Gastrocnemius medialis (tissue), 4 donors: ENCODE measurements at regions of chr3 and their contacts with region 1.

Region 1: DNA sequence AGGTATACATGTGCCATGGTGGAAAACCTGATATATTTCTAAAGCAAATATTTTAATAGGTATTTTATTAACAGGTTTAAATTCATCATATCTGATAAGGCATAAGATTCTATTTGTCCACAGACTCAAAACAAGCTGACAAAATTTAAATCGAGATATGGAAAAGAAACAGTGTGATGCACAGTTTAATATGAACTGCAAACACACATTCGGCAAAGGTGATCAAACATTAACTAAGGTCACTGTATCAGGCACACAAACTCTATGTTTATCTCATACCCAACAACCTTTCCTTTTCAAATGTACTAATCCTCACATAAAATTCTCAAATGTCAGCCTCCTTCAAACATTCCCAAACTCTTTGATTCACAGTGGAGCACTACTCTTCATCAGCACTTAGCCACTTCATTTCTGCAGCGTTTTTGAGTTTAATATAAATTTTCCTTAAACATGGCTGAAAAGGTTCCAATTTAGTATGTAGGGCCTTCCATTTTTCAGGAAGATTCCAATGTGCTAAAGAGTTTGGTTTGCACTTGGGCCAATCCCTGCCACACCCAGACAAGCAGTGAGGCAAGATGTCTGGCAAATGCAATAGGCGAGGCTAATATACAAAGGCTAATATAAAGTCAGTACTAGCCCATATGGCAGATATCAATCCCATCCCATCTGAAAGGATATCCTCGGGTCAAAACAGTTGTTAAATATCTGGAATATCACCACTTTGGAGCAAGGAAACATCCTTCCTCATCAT is 84.6 kb downstream of the GBE1 start:
- DNase-seq: no peak
- ATAC-seq: no peak
- H3K4me3 ChIP-seq: no peak overlapping the region
- H3K27ac ChIP-seq: peak overlapping the region in 1 of 4 donors; percentile 4
- H3K4me1 ChIP-seq: peaks cover 6 to 18% of the 10 kb centered on the region in 2 donors
- H3K27me3 ChIP-seq: no peaks in the 10 kb centered on the region
- CTCF ChIP-seq: no peak
- POLR2A ChIP-seq: no peak

Region 2: GRCh38 chr3:81602781-81603180 is 74.1 kb before region 1 on chr3:
- in situ Hi-C with region 1: no loop called
- intact Hi-C with region 1: no loop called
- DNase-seq: no peak
- ATAC-seq: no peak
- H3K4me3 ChIP-seq: no peak overlapping the region
- H3K27ac ChIP-seq: no peak overlapping the region
- H3K4me1 ChIP-seq: no peaks in the 10 kb centered on the region
- H3K27me3 ChIP-seq: no peaks in the 10 kb centered on the region
- CTCF ChIP-seq: no peak
- POLR2A ChIP-seq: no peak

Region 3: GRCh38 chr3:81707996-81708395 is 31.1 kb after region 1 on chr3:
- in situ Hi-C with region 1: no loop called
- intact Hi-C with region 1: loop called (anchors 5 kb)
- DNase-seq: no peak
- ATAC-seq: no peak
- H3K4me3 ChIP-seq: no peak overlapping the region
- H3K27ac ChIP-seq: peak overlapping the region in 2 of 4 donors; percentile 2 to 24
- H3K4me1 ChIP-seq: peaks cover 31 to 46% of the 10 kb centered on the region in 2 donors
- H3K27me3 ChIP-seq: no peaks in the 10 kb centered on the region
- CTCF ChIP-seq: no peak
- POLR2A ChIP-seq: no peak

Region 4: GRCh38 chr3:82000773-82001172 is 323.9 kb after region 1 on chr3:
- in situ Hi-C with region 1: loop called in 1 of 4 experiments (anchors 10 kb)
- intact Hi-C with region 1: no loop called
- DNase-seq: peak; percentile 15 to 31
- ATAC-seq: peak; percentile 53 to 79
- H3K4me3 ChIP-seq: no peak overlapping the region
- H3K27ac ChIP-seq: no peak overlapping the region
- H3K4me1 ChIP-seq: peaks cover 14 to 16% of the 10 kb centered on the region in 2 donors
- H3K27me3 ChIP-seq: no peaks in the 10 kb centered on the region
- CTCF ChIP-seq: no peak
- POLR2A ChIP-seq: no peak